AG04449 (cell line): ENCODE measurements at regions of chr17 and their contacts with region 1.

Region 1: GRCh38 chr17:34361478-34362061 is 1.5 kb downstream of the CCL1 start:
- DNase-seq: peak; percentile 40
- H3K4me3 ChIP-seq: no peak overlapping the region
- CTCF ChIP-seq: peak; percentile 96

Region 2: GRCh38 chr17:34163646-34164045 is 197.9 kb before region 1 on chr17:
- CTCF ChIA-PET with region 1: interaction called, 153 read pairs
- POLR2A ChIA-PET with region 1: no interaction called
- DNase-seq: no peak
- H3K4me3 ChIP-seq: no peak overlapping the region
- CTCF ChIP-seq: peak; percentile 32

Region 3: GRCh38 chr17:34220754-34221395 is 140.7 kb before region 1 on chr17:
- CTCF ChIA-PET with region 1: interaction called, 29 read pairs
- POLR2A ChIA-PET with region 1: no interaction called
- DNase-seq: no peak
- H3K4me3 ChIP-seq: no peak overlapping the region
- CTCF ChIP-seq: no peak

Region 4: DNA sequence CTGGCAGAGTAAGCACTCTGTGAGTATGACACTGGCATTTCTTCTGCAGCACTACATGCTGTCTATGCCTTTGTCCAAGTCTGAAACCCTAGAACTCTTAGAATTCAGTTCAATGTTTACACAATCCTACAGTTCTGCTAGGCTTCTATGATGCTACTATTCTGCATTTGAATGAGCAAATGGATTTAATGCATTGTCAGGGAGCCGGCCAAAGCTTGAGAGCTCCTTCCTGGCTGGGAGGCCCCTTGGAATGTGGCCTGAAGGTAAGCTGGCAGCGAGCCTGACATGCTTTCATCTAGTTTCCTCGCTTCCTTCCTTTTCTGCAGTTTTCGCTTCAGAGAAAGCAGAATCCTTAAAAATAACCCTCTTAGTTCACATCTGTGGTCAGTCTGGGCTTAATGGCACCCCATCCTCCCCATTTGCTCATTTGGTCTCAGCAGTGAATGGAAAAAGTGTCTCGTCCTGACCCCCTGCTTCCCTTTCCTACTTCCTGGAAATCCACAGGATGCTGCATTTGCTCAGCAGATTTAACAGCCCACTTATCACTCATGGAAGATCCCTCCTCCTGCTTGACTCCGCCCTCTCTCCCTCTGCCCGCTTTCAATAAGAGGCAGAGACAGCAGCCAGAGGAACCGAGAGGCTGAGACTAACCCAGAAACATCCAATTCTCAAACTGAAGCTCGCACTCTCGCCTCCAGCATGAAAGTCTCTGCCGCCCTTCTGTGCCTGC is 106.8 kb before region 1 on chr17 and contains the start of gene CCL2:
- CTCF ChIA-PET with region 1: interaction called, 73 read pairs
- POLR2A ChIA-PET with region 1: no interaction called
- DNase-seq: no peak
- H3K4me3 ChIP-seq: peak within 1 kb of the TSS; percentile 67
- CTCF ChIP-seq: no peak

Region 5: DNA sequence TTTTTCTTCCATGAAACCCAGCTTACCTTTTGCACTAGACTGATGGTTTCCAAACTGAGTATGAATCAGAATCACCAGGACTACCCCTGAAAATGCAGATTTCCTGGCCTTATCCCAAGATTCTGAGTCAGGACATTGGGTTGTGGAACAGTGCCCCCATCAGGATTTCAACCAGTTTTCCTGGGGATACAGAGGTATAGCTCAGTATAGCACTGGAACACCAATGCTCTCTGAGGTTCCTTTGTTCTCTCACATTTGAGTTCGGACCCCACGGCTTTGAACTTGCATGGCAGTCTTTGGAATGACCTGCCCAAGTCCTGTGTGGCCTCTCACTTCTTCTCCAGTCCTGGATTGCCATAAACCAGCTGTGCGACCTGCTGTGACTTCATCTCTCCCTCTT is 55.1 kb before region 1 on chr17:
- CTCF ChIA-PET with region 1: interaction called, 163 read pairs
- POLR2A ChIA-PET with region 1: no interaction called
- DNase-seq: no peak
- H3K4me3 ChIP-seq: no peak overlapping the region
- CTCF ChIP-seq: peak; percentile 53

Region 6: GRCh38 chr17:34347063-34347462 is 14.5 kb before region 1 on chr17:
- CTCF ChIA-PET with region 1: interaction called, 19 read pairs
- POLR2A ChIA-PET with region 1: no interaction called
- DNase-seq: no peak
- H3K4me3 ChIP-seq: no peak overlapping the region
- CTCF ChIP-seq: no peak

Region 7: GRCh38 chr17:34651402-34651811 is 289.8 kb after region 1 on chr17:
- CTCF ChIA-PET with region 1: no interaction called
- POLR2A ChIA-PET with region 1: no interaction called
- DNase-seq: no peak
- H3K4me3 ChIP-seq: no peak overlapping the region
- CTCF ChIP-seq: no peak

Region 8: DNA sequence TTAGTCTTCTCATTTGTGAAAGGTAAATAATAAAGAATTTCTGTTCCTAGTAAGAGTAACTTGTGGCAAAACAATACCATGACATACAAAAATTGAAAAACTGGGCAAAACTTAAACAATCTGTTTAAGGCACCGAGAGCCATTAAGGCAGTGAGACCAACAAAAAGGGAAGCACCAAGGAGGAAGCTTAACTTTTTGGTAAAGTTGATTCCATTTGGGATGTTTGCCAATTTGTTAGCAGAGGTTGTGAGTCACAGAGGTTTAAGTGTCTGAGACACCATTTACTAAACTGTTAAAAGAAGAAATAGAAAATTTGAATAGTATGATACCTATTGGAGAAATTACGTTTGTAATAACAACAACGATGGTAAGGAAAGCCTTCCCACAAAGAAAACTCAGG is 827.7 kb after region 1 on chr17:
- CTCF ChIA-PET with region 1: no interaction called
- POLR2A ChIA-PET with region 1: no interaction called
- DNase-seq: no peak
- H3K4me3 ChIP-seq: no peak overlapping the region
- CTCF ChIP-seq: no peak